Psoas muscle (tissue), 8 donors: ENCODE measurements at regions of chr4 and their contacts with region 1.

Region 1: DNA sequence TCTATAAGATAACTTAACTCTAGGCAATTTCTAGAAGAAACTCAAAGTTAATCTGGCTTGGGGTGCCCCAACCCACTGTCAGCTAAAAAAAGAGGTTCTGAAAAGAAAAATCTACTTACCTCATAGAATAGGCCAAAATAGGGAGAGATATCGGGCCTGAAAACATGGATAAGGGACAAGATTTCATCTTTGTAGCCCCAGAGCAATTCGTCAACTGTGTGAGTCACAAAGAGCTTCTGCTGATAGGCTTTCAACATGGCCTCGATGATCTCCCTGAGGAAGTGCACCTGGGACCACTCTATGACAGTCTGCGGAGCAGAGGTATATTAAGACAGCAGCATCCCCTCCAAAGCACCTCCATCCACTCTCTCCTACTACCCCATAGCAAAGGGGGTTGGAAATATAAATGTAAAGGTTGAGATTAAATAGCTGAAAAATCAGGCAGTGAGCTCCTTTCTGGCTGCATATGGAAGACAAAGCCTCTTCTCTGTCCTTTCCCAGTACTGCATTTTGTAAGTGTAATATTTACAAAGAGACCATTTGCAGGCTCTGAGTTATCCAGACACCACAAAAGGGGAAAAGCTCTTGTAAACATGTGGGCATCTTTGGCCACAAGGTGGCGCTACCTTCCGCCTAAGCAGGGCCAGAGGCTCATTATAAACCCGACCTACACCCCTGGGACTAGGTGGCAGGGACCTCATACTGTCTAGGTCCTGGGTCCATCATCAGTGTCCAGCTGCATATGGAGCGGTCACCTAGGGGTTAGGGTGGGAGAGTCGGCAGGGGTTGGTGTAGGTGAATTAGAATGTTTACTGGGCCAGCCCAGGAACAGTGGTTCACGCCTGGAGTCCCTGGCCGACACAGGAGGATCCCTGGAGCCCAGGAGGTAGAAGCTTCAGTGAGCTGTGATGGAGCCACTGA is 31.5 kb upstream of the NUP54 start:
- DNase-seq: peak; percentile 83 to 94
- ATAC-seq: peak; percentile 85 to 91 (median 87)
- H3K4me3 ChIP-seq: no peak overlapping the region
- H3K27ac ChIP-seq: peak overlapping the region; percentile 41
- H3K4me1 ChIP-seq: peaks cover 20% of the 10 kb centered on the region
- H3K27me3 ChIP-seq: no peaks in the 10 kb centered on the region
- CTCF ChIP-seq: peak; percentile 94

Region 2: DNA sequence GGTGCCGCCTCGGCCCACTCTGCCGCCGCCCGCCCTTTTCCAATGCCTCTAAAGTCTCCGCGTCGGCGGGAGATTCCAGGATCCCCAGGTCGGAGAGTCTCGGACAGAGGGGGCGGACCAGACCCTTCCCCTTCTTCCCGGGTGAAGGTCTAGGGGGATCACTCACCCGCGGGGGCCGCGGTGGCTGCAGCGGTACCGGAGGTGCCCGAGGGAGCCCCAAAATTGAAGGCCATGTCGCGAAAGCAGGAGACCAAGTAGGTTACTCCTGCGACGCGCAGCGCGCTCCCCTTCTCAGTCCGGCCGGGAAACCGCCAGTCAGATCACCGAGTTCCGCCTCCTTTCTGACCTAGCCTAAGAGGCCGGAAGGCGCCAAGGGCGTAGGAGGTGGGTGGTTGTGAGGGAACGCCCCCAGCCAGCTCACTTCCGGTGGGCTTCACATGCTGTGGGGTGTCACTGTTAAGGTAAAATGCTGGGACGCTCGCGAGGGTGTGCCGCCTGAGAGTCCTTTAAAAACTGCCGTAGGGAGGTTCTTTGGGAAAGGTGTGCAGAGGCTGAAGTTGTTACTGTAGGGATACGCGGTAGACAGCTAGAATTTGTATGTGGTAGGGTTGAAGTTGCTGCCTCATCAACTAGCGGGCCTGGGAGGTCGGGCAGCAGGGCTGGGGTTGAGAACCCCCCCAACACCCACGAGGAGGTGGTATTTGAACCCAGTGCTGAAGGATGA is 31.4 kb before region 1 on chr4 and contains the start of gene NUP54:
- intact Hi-C with region 1: no loop called
- DNase-seq: peak; percentile 93 to 97
- ATAC-seq: peak; percentile 99
- H3K4me3 ChIP-seq: peak within 1 kb of the TSS; percentile 89
- H3K27ac ChIP-seq: peak within 1 kb of the TSS; percentile 91
- H3K4me1 ChIP-seq: peaks cover 24% of the 10 kb centered on the region
- H3K27me3 ChIP-seq: no peaks in the 10 kb centered on the region
- CTCF ChIP-seq: no peak
- total RNA-seq, gene NUP54: 14.1 to 25.9 (median 17.6) TPM

Region 3: GRCh38 chr4:76233957-76234678 is 54.5 kb after region 1 on chr4:
- intact Hi-C with region 1: no loop called
- DNase-seq: no peak
- ATAC-seq: no peak
- H3K4me3 ChIP-seq: no peak overlapping the region
- H3K27ac ChIP-seq: no peak overlapping the region
- H3K4me1 ChIP-seq: peaks cover 16% of the 10 kb centered on the region
- H3K27me3 ChIP-seq: no peaks in the 10 kb centered on the region
- CTCF ChIP-seq: no peak

Region 4: DNA sequence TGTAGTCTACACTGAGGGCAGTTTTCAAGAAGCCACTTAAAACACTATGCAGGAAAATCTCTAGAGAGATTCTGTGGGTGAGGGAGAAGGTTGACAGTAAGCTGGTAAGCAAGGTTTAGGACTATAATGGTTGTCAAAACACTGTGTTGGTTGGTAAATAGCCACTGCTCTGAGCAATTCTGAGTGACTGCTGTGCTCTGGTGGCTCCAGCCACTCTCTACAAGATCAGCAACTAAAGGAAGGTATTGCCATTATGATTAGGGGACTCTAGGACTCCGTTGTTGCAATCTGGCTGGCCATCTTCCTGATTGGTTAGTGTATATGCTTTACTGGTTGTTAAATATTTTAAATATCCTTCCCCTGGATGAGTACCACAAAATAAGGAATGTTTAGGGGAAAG is 66.4 kb after region 1 on chr4:
- intact Hi-C with region 1: loop called (anchors 2 to 5 kb)
- DNase-seq: no peak
- ATAC-seq: peak; percentile 65 to 90 (median 80)
- H3K4me3 ChIP-seq: no peak overlapping the region
- H3K27ac ChIP-seq: no peak overlapping the region
- H3K4me1 ChIP-seq: peaks cover 10% of the 10 kb centered on the region
- H3K27me3 ChIP-seq: no peaks in the 10 kb centered on the region
- CTCF ChIP-seq: peak; percentile 21

Region 5: DNA sequence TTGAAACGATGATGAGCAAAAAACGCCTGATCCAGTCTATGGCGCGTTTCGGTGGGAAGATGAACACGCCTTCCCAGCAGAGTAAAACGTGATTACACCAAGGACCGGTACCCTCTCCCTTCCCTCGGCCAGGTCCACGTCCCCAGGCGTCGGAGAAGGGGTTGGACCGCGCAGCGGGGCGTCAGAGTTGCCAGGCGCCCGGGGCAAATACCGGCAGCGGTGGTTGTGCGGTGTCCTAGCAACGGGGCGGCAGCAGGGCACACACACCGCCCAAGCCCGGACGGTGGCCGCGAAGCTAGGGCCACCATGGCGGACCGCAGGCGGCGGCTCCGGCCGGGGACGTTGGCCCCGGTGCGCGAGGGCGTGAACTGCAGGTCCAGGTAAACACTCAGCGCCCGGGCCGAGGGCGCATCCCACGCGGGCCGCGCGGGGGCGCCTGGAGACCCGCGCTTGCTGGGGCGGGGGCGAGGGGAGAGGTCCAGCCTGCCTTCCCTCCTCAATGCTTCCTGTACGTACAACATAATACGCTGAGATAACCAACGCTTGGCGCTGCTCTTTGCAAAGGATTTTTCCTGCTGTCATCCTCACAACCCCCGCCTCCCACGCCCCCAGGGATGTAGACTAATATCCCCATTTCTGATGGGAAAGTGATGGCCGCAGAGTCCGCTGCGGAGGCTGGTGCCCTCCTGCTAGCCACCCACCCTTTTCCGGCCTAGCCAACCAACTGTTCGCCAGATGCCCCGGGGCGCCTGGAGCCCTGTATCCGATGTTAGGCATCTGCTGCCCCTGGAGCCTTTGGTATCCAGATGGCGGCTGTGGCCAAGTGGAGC is 72.0 kb after region 1 on chr4 and contains the start of gene FAM47E:
- intact Hi-C with region 1: loop called (anchors 2 to 5 kb)
- DNase-seq: peak; percentile 82 to 93
- ATAC-seq: peak; percentile 98 to 99 (median 98)
- H3K4me3 ChIP-seq: peak within 1 kb of the TSS; percentile 79
- H3K27ac ChIP-seq: peak within 1 kb of the TSS; percentile 78
- H3K4me1 ChIP-seq: peaks cover 10% of the 10 kb centered on the region
- H3K27me3 ChIP-seq: no peaks in the 10 kb centered on the region
- CTCF ChIP-seq: peak; percentile 49
- total RNA-seq, gene FAM47E: 1.7 to 4.6 (median 3.2) TPM

Region 6: DNA sequence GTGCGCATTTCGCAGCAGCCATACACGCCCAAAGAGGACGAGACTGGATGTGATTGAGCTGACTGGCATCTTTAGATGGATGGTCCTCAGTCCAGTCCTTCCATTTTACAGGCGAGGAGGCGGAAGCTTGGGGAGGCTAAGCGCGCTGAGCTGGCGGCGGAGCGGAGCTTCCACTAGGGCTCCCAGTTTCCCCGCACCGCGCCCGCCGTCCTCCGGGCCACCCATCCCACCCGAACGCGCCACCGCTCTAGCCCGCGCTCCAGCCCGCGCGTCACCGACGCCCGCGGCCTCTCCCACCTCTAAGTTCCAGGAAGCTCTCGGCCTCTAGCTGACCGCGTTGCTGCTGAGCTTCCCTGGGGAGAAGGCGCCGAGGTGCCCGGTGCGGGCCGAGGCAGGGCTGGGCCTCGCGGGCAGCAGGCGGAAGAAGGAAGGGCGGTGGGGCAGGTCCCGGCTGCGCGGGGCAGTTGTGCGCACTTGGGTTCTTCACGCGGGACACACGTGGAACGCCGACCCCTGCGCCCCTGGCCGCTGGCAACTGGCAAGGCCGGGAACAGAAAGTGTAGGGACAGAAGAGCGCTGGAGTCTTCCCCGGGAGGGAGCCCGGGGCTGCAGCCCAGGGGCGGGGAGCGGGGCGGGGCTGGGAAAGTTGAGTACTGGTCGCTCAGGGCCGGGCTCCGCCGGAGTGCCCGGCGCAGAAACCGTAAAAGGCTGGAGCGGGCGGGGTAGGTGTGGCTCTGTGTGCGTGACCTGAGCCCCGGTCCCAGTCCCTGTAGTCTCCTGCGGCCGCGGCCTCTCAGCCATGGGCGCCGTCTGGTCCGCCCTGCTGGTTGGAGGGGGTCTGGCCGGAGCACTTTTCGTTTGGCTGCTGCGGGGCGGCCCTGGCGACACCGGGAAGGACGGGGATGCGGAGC is 126.6 kb after region 1 on chr4 and contains the start of gene STBD1:
- intact Hi-C with region 1: loop called in 1 of 2 experiments (anchors 5 kb)
- DNase-seq: peak; percentile 83 to 90
- ATAC-seq: peak; percentile 81 to 85 (median 84)
- H3K4me3 ChIP-seq: peak within 1 kb of the TSS; percentile 97
- H3K27ac ChIP-seq: peak within 1 kb of the TSS; percentile 98
- H3K4me1 ChIP-seq: peaks cover 66% of the 10 kb centered on the region
- H3K27me3 ChIP-seq: no peaks in the 10 kb centered on the region
- CTCF ChIP-seq: no peak
- total RNA-seq, gene STBD1: 39.8 to 59.7 (median 47.2) TPM

Region 7: GRCh38 chr4:76420762-76421581 is 241.3 kb after region 1 on chr4 and contains the start of gene CCDC158:
- intact Hi-C with region 1: loop called in 1 of 2 experiments (anchors 10 kb)
- DNase-seq: peak; percentile 28 to 54
- ATAC-seq: peak; percentile 75 to 88 (median 86)
- H3K4me3 ChIP-seq: peak within 1 kb of the TSS; percentile 75
- H3K27ac ChIP-seq: no peak within 1 kb of the TSS
- H3K4me1 ChIP-seq: peaks cover under 1% of the 10 kb centered on the region
- H3K27me3 ChIP-seq: peaks cover 0 to 11% (median 0%) of the 10 kb centered on the region in 3 donors
- CTCF ChIP-seq: no peak
- total RNA-seq, gene CCDC158: 0.17 to 0.32 (median 0.17) TPM in 3 of 4 donors, not detected in the other

Region 8: GRCh38 chr4:76504613-76505465 is 325.2 kb after region 1 on chr4:
- intact Hi-C with region 1: loop called (anchors 5 to 10 kb)
- DNase-seq: no peak
- ATAC-seq: peak; percentile 40 to 74 (median 54)
- H3K4me3 ChIP-seq: no peak overlapping the region
- H3K27ac ChIP-seq: no peak overlapping the region
- H3K4me1 ChIP-seq: no peaks in the 10 kb centered on the region
- H3K27me3 ChIP-seq: no peaks in the 10 kb centered on the region
- CTCF ChIP-seq: peak; percentile 75